Mammary epithelial cell (primary cell): ENCODE measurements at regions of chr11 and their contacts with region 1.

Region 1: GRCh38 chr11:3675971-3676370 is 4.8 kb upstream of the CHRNA10 start:
- DNase-seq: peak; percentile 14
- H3K4me3 ChIP-seq: no peak overlapping the region
- H3K27ac ChIP-seq: no peak overlapping the region
- H3K4me1 ChIP-seq: peaks cover 19% of the 10 kb centered on the region
- H3K27me3 ChIP-seq: no peaks in the 10 kb centered on the region
- CTCF ChIP-seq: no peak

Region 2: GRCh38 chr11:3220521-3221407 is 455.2 kb before region 1 on chr11:
- CTCF ChIA-PET with region 1: no interaction called
- dilution Hi-C with region 1: no loop called
- in situ Hi-C with region 1: no loop called
- intact Hi-C with region 1: no loop called
- DNase-seq: no peak
- H3K4me3 ChIP-seq: no peak overlapping the region
- H3K27ac ChIP-seq: no peak overlapping the region
- H3K4me1 ChIP-seq: no peaks in the 10 kb centered on the region
- H3K27me3 ChIP-seq: peaks cover 3% of the 10 kb centered on the region
- CTCF ChIP-seq: no peak

Region 3: GRCh38 chr11:3644817-3645235 is 31.1 kb before region 1 on chr11 and contains the start of gene ART1:
- CTCF ChIA-PET with region 1: no interaction called
- dilution Hi-C with region 1: no loop called
- in situ Hi-C with region 1: no loop called
- intact Hi-C with region 1: no loop called
- DNase-seq: no peak
- H3K4me3 ChIP-seq: no peak within 1 kb of the TSS
- H3K27ac ChIP-seq: no peak within 1 kb of the TSS
- H3K4me1 ChIP-seq: peaks cover 7% of the 10 kb centered on the region
- H3K27me3 ChIP-seq: peaks cover 4% of the 10 kb centered on the region
- CTCF ChIP-seq: no peak
- total RNA-seq, gene ART1: not detected

Region 4: DNA sequence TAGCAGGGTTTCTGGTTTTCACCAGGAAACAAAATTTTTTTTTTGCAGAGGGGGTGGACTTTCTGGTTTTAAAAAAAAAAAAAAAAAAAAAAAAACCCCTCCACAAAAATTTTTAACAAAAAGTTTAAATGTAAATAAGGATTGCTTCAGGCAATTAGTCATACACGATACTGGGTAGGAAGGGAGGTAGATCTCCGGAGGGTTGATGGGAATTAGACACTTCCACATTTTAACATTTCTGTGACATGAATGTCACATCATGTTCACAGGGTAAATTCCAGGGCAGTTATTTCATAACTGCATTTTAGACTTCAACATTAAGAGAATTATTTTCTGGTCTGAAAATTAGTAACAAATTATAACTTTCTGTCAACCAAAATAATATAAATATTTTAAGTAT is 105.5 kb after region 1 on chr11:
- CTCF ChIA-PET with region 1: no interaction called
- dilution Hi-C with region 1: loop called (anchors 5 kb)
- in situ Hi-C with region 1: no loop called
- intact Hi-C with region 1: no loop called
- DNase-seq: peak; percentile 61
- H3K4me3 ChIP-seq: no peak overlapping the region
- H3K27ac ChIP-seq: peak overlapping the region; percentile 57
- H3K4me1 ChIP-seq: peaks cover 5% of the 10 kb centered on the region
- H3K27me3 ChIP-seq: no peaks in the 10 kb centered on the region
- CTCF ChIP-seq: no peak